ENCODE measurements at regions of chr5 and their contacts with region 1.

Region 1: GRCh38 chr5:56802205-56802604 is 13.1 kb upstream of the MAP3K1 start:
- DNase-seq: no peak
- ATAC-seq: peak in 1 of 2 donors; percentile 75
- H3K4me3 ChIP-seq: no peak overlapping the region
- H3K27ac ChIP-seq: no peak overlapping the region
- H3K4me1 ChIP-seq: no peaks in the 10 kb centered on the region
- H3K27me3 ChIP-seq: no peaks in the 10 kb centered on the region

Region 2: DNA sequence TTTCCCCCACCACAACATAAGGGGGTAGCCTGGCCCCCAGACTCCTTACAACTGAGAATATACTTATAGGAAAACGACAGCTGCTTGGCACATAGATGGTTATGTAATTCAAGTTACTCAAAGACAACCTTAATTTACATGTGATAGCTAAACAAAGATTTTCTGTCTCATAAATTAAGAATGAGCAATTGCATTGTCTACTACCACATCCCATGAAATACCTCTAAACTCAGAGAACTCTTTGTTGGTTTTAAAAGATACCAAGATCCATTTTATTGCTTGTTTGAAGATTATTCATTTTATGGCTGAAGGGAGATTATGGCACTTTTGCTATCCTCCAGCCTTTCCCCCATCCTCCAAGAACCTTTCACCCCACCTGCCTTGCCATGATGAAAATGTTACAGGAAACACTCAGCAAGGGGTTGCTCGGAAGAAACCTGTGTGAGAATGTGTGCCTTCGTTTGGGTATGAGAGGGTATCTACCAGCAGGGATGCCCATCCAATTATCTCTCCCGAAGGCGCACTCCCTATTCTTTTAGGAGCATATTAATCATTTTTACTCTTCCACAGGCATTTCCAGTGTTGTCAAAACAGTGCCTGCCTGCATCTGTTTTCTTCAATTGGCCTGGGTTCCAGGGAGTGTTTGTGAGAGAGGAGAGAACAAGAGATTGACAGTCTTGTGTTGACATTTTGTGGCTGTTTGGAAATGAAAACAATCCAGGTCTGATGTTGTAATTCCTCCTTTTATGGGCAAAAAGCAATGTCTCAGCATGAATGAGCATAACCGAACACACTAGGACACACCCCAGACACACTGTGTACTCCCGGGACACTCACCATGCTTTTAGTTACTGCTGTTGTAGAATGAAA is 361.1 kb before region 1 on chr5:
- intact Hi-C with region 1: no loop called
- DNase-seq: peak in 1 of 3 donors; percentile 34
- ATAC-seq: peak; percentile 86 to 89
- H3K4me3 ChIP-seq: no peak overlapping the region
- H3K27ac ChIP-seq: no peak overlapping the region
- H3K4me1 ChIP-seq: no peaks in the 10 kb centered on the region
- H3K27me3 ChIP-seq: no peaks in the 10 kb centered on the region

Region 3: DNA sequence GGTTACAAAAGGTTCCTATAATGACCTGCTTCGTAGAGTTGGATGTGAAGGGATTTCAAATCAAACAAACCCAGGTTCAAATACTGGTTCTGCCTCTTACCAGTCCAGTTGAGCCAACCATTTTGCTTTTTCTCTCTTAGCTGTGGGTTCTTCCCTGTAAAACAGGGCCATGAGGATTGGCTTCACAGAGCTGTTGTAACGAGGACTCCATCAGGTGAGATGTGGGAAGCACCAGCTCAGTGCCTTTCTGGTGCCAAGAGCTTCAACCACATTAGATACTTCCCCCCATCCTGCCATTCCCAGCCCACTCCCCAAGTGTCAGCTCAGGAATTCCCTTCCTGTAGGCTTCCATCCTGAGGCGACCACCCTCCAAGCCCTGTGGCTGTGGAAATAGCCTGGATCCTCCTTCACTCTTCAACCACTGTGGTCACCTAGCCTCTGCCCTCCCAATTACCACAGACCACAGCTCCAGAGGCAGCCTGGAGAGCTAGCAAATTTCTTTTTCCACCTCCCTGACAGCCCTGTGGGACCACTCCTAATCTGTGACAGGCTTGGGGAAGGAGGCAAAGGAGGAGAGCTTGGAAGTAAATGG is 206.7 kb before region 1 on chr5:
- intact Hi-C with region 1: no loop called
- DNase-seq: no peak
- ATAC-seq: no peak
- H3K4me3 ChIP-seq: no peak overlapping the region
- H3K27ac ChIP-seq: no peak overlapping the region
- H3K4me1 ChIP-seq: no peaks in the 10 kb centered on the region
- H3K27me3 ChIP-seq: no peaks in the 10 kb centered on the region

Region 4: GRCh38 chr5:56696900-56697299 is 105.3 kb before region 1 on chr5:
- intact Hi-C with region 1: loop called in 1 of 4 experiments (anchors 10 kb)
- DNase-seq: no peak
- ATAC-seq: no peak
- H3K4me3 ChIP-seq: no peak overlapping the region
- H3K27ac ChIP-seq: no peak overlapping the region
- H3K4me1 ChIP-seq: peaks cover 12% of the 10 kb centered on the region
- H3K27me3 ChIP-seq: no peaks in the 10 kb centered on the region

Measured in right cardiac atrium (tissue), 5 donors.